AG04449 (cell line): ENCODE measurements at regions of chr12 and their contacts with region 1.

Region 1: GRCh38 chr12:1583421-1584078 is 10.8 kb downstream of the FBXL14 start:
- DNase-seq: no peak
- H3K4me3 ChIP-seq: peak overlapping the region; percentile 24
- CTCF ChIP-seq: peak; percentile 84

Region 2: DNA sequence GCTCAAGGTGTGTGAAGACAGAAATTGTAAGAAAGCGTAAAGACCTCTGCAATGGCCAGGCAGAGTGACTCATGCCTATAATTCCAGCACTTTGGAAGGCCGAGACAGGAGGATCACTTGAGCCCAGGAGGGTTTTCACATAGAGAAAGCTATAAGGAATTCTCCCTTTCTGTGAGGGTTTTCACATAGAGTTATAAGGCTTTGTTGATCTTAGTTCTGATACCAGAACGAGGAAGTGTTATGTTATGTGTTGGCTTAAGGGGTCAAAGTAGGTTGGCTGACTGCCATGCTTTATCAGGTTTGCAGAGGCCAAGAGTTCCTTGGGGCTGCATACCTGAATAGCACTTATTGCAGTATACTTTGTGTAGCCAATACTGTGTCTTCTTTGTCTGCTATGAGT is 453.4 kb before region 1 on chr12:
- CTCF ChIA-PET with region 1: interaction called, 13 read pairs
- POLR2A ChIA-PET with region 1: no interaction called
- DNase-seq: no peak
- H3K4me3 ChIP-seq: no peak overlapping the region
- CTCF ChIP-seq: no peak

Region 3: DNA sequence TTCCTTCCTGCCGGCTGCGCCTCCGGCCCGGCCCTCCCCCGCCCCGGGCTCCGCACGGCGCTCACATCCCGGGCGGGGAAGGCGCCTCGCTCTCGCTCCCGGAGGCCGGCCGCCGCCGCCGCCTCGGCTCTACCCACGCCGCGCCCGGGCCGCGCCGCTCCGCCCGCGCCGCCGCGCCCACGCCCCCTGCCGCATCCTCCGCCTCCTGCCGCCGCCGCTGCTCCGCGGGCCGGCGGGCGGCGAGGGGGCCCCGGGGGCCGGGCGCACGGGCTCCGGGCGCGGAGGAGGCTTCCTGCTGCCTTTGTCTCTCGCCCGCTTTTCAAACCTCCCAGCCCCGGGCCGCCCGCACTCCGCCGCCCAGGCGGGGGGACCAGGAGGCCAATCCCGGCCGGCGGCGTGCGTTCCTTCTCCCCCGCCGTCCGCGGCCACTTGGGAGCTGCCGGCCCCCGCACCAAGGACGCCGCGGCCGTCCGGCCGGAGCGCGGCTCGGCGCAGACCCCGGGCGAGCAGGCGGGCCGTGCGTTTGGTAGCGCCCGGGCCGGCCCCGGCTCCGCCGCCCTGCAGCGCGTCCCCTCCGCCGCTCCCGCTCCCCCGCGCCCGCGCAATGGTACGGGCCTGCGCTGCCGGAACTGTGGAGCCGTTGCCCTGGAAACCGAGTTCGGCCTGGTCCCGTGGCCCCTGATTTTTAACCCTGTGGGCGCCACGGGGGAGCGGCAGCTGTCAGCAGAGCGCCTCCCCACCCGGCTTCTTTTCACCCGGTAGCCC is 10.9 kb after region 1 on chr12 and contains the start of gene FBXL14:
- CTCF ChIA-PET with region 1: interaction called, 23 read pairs
- POLR2A ChIA-PET with region 1: no interaction called
- DNase-seq: no peak
- H3K4me3 ChIP-seq: peak within 1 kb of the TSS; percentile 74
- CTCF ChIP-seq: no peak

Region 4: DNA sequence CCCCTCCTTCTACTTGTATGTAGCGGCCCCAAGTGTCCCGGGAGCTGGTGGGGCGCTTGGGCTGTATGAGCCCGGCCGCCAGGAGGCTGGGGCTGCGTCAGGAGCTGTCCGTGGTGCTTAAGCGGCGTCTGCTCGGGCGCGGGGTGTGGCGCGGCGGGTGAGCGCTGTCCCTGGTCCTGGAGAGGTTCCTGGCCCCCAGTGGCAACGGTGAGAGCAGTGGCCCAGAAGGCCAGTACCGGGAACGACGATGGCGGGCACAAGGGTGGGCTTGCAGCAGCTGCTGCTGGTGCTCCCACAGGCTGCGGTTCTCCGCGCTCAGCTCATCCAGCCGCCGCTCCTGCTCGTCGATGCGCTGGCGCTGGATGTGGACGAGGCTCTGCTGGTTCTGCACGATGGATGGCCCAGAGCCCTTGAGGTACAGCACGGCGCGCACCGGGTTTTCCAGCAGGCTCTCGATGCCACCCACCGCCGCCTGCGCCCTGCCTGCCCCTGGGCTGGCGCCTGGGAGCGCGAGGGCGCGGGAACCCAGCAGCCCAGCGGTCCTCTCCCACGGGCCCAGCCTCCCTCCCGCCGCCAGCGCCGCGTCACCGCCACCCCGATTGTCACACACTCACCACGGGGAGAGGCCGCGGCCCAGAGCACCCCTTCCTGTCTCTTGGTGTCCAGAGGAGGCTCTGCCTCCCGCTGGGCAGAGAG is 1169.3 kb after region 1 on chr12:
- CTCF ChIA-PET with region 1: no interaction called
- POLR2A ChIA-PET with region 1: no interaction called
- DNase-seq: no peak
- H3K4me3 ChIP-seq: no peak overlapping the region
- CTCF ChIP-seq: peak; percentile 2